Heart left ventricle (tissue), 16 donors: ENCODE measurements at regions of chr16 and their contacts with region 1.

Region 1: GRCh38 chr16:30813821-30814189 is 26.8 kb upstream of the ZNF629 start:
- DNase-seq: no peak
- ATAC-seq: peak in 3 of 4 donors; percentile 19
- H3K4me3 ChIP-seq: peak overlapping the region in 11 of 12 donors; percentile 31 to 66 (median 51)
- H3K27ac ChIP-seq: peak overlapping the region in 11 of 12 donors; percentile 60 to 90 (median 77)
- H3K4me1 ChIP-seq: peaks cover 0 to 12% (median 6%) of the 10 kb centered on the region in 12 donors
- H3K27me3 ChIP-seq: no peaks in the 10 kb centered on the region
- CTCF ChIP-seq: no peak
- POLR2A ChIP-seq: no peak

Region 2: DNA sequence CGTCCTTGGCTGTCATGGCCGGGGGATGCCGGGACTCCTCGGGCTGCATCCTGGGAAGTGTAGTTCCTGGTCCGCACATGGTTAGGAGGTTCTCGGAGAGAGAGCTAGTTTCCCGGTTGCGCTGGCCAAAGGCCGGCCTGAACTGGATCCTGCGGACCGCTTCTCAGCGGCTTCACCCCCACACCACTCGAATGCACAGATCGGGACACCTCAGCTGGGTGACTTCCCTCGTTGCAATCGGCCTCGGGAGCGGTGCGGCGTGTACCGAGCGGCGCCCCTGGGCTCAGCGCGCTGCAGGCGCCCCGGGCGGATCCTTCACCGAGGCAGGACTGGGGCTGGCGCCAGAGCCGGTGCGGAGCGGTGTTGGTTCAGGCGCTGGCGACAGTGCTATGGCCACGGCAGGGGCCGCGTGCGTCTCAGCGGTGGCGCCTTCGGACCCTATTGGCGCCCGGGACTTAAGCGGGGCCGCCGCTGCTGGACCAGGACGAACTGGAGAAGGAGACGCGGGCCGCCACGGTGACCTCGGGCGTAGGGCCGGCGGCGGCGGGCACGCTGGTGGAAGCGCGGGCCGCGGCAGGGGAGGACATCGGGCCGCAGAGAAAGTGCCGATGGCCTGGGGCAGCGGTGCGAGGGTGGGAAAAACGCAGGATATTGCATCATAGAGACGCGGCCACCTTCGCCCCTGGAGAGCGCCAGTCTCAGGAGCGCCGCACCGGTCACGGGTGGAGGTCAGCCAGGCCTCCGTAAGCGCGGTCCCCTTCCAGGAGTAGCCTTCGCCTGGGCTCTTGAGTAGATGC is 38.2 kb before region 1 on chr16:
- intact Hi-C with region 1: loop called in 2 of 10 experiments (anchors 5 kb)
- DNase-seq: peak; percentile 87 to 92 (median 89)
- ATAC-seq: peak; percentile 78 to 89 (median 86)
- H3K4me3 ChIP-seq: peak overlapping the region; percentile 61 to 93 (median 78)
- H3K27ac ChIP-seq: peak overlapping the region; percentile 67 to 99 (median 92)
- H3K4me1 ChIP-seq: peaks cover 0 to 41% (median 23%) of the 10 kb centered on the region in 12 donors
- H3K27me3 ChIP-seq: no peaks in the 10 kb centered on the region
- CTCF ChIP-seq: peak in 1 of 12 donors; percentile 6
- POLR2A ChIP-seq: peak in 1 of 2 donors; percentile 55

Region 3: GRCh38 chr16:30839523-30840227 is 25.9 kb after region 1 on chr16:
- intact Hi-C with region 1: no loop called
- DNase-seq: no peak
- ATAC-seq: peak in 1 of 4 donors; percentile 34
- H3K4me3 ChIP-seq: no peak overlapping the region
- H3K27ac ChIP-seq: no peak overlapping the region
- H3K4me1 ChIP-seq: peaks cover 0 to 4% (median 0%) of the 10 kb centered on the region in 12 donors
- H3K27me3 ChIP-seq: no peaks in the 10 kb centered on the region
- CTCF ChIP-seq: no peak
- POLR2A ChIP-seq: no peak

Region 4: GRCh38 chr16:30874821-30875717 is 61.3 kb after region 1 on chr16:
- intact Hi-C with region 1: loop called in 3 of 10 experiments (anchors 5 to 10 kb)
- DNase-seq: peak; percentile 92 to 96 (median 95)
- ATAC-seq: peak; percentile 97 to 99 (median 98)
- H3K4me3 ChIP-seq: peak overlapping the region; percentile 52 to 99 (median 87)
- H3K27ac ChIP-seq: peak overlapping the region; percentile 80 to 100 (median 94)
- H3K4me1 ChIP-seq: peaks cover 3 to 29% (median 20%) of the 10 kb centered on the region in 12 donors
- H3K27me3 ChIP-seq: no peaks in the 10 kb centered on the region
- CTCF ChIP-seq: peak in 1 of 12 donors; percentile 12
- POLR2A ChIP-seq: peak in 1 of 2 donors; percentile 86